ENCODE measurements at regions of chr1 and their contacts with region 1.

Region 1: DNA sequence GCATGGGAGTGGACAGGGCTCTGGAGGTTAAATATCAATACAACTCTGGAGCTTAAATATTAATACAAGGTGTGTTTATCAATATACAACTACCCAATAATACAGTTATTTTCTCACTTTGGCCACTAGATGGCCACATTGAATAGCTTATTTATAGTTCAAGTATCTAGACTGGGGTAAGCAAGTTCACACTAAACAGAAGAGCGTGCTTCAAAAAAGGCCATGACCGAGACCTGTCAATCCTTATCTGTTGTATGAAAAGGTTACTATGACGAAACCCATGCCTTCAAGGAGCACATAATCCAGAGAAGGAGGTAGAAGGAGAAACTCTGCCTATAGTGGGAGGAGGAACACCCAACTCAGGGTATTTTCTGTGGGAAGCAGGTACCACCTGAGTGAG is 29.1 kb downstream of the CHML start:
- DNase-seq: peak in 2 of 5 donors; percentile 55 to 59
- H3K4me3 ChIP-seq: no peak overlapping the region
- H3K4me3 Mint-ChIP-seq: no peak overlapping the region
- H3K27ac ChIP-seq: no peak overlapping the region
- H3K27ac Mint-ChIP-seq: no peak overlapping the region
- H3K4me1 ChIP-seq: no peaks in the 10 kb centered on the region
- H3K4me1 Mint-ChIP-seq: no peaks in the 10 kb centered on the region
- H3K27me3 ChIP-seq: no peaks in the 10 kb centered on the region
- H3K27me3 Mint-ChIP-seq: peaks cover 0 to 1% of the 10 kb centered on the region in 2 donors

Region 2: DNA sequence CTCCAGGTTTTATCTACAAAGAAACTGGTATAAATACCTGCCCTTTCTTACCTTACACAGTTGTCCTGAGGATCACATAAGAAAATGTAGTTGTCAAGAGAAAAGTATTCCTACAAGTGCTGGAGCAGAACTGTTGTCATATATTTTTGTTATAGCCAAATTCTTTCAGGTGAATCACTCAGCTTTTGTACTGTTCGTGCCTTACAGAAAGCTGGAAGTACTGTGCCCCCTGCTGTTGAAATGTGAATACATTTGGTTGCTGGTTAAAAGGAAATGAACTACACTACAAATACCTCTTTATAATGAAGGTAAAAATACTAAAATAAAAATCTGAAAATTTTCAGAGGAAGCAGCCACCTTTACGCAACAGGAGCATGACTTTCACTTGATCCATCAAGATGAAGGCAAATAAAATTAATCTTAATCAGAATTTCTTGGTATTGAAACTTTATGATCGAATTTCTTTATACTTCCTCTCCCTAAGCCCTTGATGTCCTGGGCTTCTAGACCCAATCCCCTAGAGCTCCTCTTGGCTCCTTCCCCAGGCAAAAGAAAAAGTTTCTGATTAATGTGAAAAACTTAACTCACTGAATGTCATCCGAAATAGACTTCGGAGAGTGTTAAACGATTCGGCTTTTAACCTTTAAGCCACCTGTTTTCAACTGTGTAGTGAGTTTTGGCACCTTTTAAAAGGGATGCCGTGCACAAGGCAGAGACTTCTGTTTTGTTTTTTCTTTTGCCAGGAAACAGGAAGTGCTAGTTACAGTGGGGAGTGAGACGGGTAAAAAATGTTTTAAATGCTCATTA is 16.6 kb after region 1 on chr1:
- CTCF ChIA-PET with region 1: interaction called, 18 read pairs
- POLR2A ChIA-PET with region 1: no interaction called
- DNase-seq: peak in 3 of 5 donors; percentile 50 to 70 (median 53)
- H3K4me3 ChIP-seq: peak overlapping the region; percentile 51
- H3K4me3 Mint-ChIP-seq: peak overlapping the region in 6 of 7 donors; percentile 68 to 79 (median 75)
- H3K27ac ChIP-seq: no peak overlapping the region
- H3K27ac Mint-ChIP-seq: peak overlapping the region; percentile 4 to 93 (median 75)
- H3K4me1 ChIP-seq: peaks cover 11% of the 10 kb centered on the region
- H3K4me1 Mint-ChIP-seq: peaks cover 14 to 18% (median 15%) of the 10 kb centered on the region in 3 donors
- H3K27me3 ChIP-seq: no peaks in the 10 kb centered on the region
- H3K27me3 Mint-ChIP-seq: no peaks in the 10 kb centered on the region

Region 3: GRCh38 chr1:241679961-241680360 is 68.9 kb after region 1 on chr1:
- CTCF ChIA-PET with region 1: no interaction called
- POLR2A ChIA-PET with region 1: no interaction called
- DNase-seq: no peak
- H3K4me3 ChIP-seq: no peak overlapping the region
- H3K4me3 Mint-ChIP-seq: no peak overlapping the region
- H3K27ac ChIP-seq: no peak overlapping the region
- H3K27ac Mint-ChIP-seq: no peak overlapping the region
- H3K4me1 ChIP-seq: peaks cover 19% of the 10 kb centered on the region
- H3K4me1 Mint-ChIP-seq: peaks cover 17 to 30% (median 21%) of the 10 kb centered on the region in 3 donors
- H3K27me3 ChIP-seq: no peaks in the 10 kb centered on the region
- H3K27me3 Mint-ChIP-seq: peaks cover 5 to 18% of the 10 kb centered on the region in 2 donors

Region 4: GRCh38 chr1:241756582-241756981 is 145.5 kb after region 1 on chr1:
- CTCF ChIA-PET with region 1: no interaction called
- POLR2A ChIA-PET with region 1: no interaction called
- DNase-seq: no peak
- H3K4me3 ChIP-seq: no peak overlapping the region
- H3K4me3 Mint-ChIP-seq: no peak overlapping the region
- H3K27ac ChIP-seq: no peak overlapping the region
- H3K27ac Mint-ChIP-seq: no peak overlapping the region
- H3K4me1 ChIP-seq: no peaks in the 10 kb centered on the region
- H3K4me1 Mint-ChIP-seq: peaks cover 0 to 3% (median 0%) of the 10 kb centered on the region in 3 donors
- H3K27me3 ChIP-seq: no peaks in the 10 kb centered on the region
- H3K27me3 Mint-ChIP-seq: peaks cover 0 to 5% of the 10 kb centered on the region in 2 donors

Region 5: DNA sequence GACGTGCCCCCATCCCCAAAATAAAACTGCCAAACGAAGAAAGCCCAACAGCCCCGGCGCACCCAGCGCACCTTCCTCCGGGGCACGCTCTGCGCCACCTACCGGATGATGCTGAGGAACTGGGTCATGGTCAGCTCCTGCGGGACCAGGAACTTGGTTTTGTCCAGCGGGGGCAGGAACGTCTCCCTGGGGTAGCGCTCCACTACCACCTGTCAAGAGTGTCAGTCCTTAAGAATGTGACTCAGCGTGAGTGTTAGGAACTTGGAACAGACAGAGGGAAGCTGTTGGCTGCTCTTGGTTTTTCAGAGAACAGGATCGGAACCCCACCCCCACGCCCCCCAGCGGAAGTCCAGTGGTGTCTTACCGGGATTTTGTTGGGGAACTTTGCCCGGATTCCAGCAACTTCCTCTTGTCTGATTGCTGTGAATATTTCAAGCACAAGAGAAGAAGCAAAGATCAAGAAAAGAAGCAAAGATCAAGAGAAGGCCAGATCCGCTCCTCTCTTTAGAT is 387.4 kb after region 1 on chr1:
- CTCF ChIA-PET with region 1: interaction called, 37 read pairs
- POLR2A ChIA-PET with region 1: interaction called, 3 read pairs
- DNase-seq: peak; percentile 2 to 59 (median 17)
- H3K4me3 ChIP-seq: no peak overlapping the region
- H3K4me3 Mint-ChIP-seq: peak overlapping the region in 5 of 7 donors; percentile 49 to 65 (median 63)
- H3K27ac ChIP-seq: no peak overlapping the region
- H3K27ac Mint-ChIP-seq: peak overlapping the region in 1 of 8 donors; percentile 52
- H3K4me1 ChIP-seq: no peaks in the 10 kb centered on the region
- H3K4me1 Mint-ChIP-seq: peaks cover 3 to 6% (median 6%) of the 10 kb centered on the region in 3 donors
- H3K27me3 ChIP-seq: no peaks in the 10 kb centered on the region
- H3K27me3 Mint-ChIP-seq: peaks cover 8 to 19% of the 10 kb centered on the region in 2 donors